ENCODE measurements at regions of chr7 and their contacts with region 1.

Region 1: DNA sequence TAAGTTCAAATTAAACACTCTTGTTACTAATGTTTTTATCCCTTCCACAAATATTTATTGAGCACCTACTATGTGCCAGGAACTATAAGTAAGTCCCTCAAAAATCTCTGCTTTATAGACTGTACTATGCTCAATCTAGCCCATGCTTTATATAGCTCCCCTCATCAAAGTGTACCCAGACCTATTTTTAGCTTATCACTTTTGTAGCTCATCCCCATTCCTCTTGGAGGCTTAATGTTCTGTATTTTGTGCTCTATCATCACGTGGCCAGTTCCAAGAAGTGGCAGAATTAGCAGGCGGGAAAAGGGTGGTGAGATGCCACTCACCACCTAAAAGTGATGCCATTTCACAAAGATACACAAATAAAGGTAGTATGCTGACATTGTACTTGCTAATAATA is 138.1 kb upstream of the BET1 start:
- DNase-seq: no peak
- H3K4me3 ChIP-seq: no peak overlapping the region
- H3K27me3 ChIP-seq: no peaks in the 10 kb centered on the region
- CTCF ChIP-seq: no peak

Region 2: GRCh38 chr7:93678185-93678584 is 464.1 kb before region 1 on chr7:
- CTCF ChIA-PET with region 1: no interaction called
- POLR2A ChIA-PET with region 1: no interaction called
- DNase-seq: no peak
- H3K4me3 ChIP-seq: no peak overlapping the region
- H3K27me3 ChIP-seq: no peaks in the 10 kb centered on the region
- CTCF ChIP-seq: no peak

Region 3: DNA sequence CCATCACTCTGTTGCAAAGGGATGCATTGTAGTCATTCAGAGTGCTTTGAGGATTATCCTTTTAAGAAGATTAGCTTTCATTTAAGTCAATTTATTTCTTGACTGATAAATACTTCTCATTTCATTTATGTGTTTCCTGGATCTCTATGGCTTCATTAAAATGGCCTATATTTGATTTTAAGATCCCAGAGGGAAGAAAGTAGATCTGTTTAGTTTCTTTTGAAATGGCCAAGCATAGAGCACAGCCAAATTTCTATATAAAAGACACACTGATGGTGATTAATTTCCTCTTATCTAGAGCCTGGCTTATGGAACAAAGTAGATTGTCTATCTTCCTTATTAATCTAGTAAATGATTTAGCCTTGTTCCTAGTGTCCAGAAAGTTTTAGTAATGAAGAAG is 438.1 kb before region 1 on chr7:
- CTCF ChIA-PET with region 1: no interaction called
- POLR2A ChIA-PET with region 1: interaction called, 16 read pairs
- DNase-seq: no peak
- H3K4me3 ChIP-seq: no peak overlapping the region
- H3K27me3 ChIP-seq: no peaks in the 10 kb centered on the region
- CTCF ChIP-seq: no peak

Region 4: GRCh38 chr7:93736668-93737369 is 405.5 kb before region 1 on chr7:
- CTCF ChIA-PET with region 1: no interaction called
- POLR2A ChIA-PET with region 1: no interaction called
- DNase-seq: no peak
- H3K4me3 ChIP-seq: no peak overlapping the region
- H3K27me3 ChIP-seq: no peaks in the 10 kb centered on the region
- CTCF ChIP-seq: no peak

Region 5: GRCh38 chr7:94313926-94314325 is 171.6 kb after region 1 on chr7:
- CTCF ChIA-PET with region 1: no interaction called
- POLR2A ChIA-PET with region 1: no interaction called
- DNase-seq: no peak
- H3K4me3 ChIP-seq: no peak overlapping the region
- H3K27me3 ChIP-seq: no peaks in the 10 kb centered on the region
- CTCF ChIP-seq: no peak

Measured in BJ (cell line).